HCT116 (cell line): ENCODE measurements at regions of chr1 and their contacts with region 1.

Region 1: DNA sequence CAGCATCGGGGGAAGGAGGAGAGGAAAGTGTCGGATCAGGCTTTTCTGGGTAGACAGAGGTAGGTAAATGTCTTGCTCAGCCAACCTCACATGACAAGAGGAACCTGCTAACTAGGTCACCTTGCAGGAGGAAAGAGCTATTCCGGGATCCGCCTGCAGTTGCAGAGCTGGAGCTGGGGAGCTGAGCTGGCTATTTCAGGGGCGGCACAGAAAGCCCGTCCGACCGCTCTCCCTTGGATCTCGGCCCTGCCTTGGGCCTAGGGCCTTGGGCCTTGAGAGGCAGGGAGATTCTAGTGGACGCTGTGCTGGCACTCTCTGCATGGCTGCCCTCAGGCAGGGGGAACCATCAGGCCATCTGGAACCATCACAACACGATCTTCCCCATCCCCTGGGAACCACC is 56.5 kb upstream of the CTPS1 start:
- DNase-seq: no peak
- ATAC-seq: no peak
- H3K4me3 ChIP-seq: no peak overlapping the region
- H3K27ac ChIP-seq: no peak overlapping the region
- H3K4me1 ChIP-seq: peaks cover 17 to 33% of the 10 kb centered on the region in 2 experiments; a peak in 3 of 4 replicates
- H3K27me3 ChIP-seq: no peaks in the 10 kb centered on the region
- CTCF ChIP-seq: no peak
- POLR2A ChIP-seq: no peak
- RAD21 ChIP-seq: no peak

Region 2: DNA sequence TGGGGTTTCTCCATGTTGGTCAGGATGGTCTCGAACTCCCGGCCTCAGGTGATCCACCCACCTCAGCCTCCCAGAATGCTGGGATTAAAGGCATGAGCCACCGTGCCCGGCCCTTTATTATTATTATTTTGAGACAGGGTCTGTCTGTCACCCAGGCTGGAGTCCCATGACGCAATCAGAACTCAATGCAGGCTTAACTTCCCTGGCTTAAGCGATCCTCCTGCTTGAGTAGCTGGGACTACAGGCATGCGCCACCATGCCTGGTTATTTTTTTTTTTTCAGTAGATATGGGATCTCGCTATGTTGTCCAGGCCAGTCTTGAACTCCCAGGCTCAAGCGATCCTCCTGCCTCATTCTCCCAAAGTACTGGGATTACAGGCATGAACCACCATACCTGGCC is 13.7 kb before region 1 on chr1:
- CTCF ChIA-PET with region 1: no interaction called
- POLR2A ChIA-PET with region 1: interaction called, 3 read pairs
- RAD21 ChIA-PET with region 1: no interaction called
- intact Hi-C with region 1: loop called (anchors 1 kb)
- DNase-seq: no peak
- ATAC-seq: no peak
- H3K4me3 ChIP-seq: no peak overlapping the region
- H3K27ac ChIP-seq: no peak overlapping the region
- H3K4me1 ChIP-seq: peaks cover 0 to 15% of the 10 kb centered on the region in 2 experiments; a peak in 3 of 4 replicates
- H3K27me3 ChIP-seq: no peaks in the 10 kb centered on the region
- CTCF ChIP-seq: no peak
- POLR2A ChIP-seq: no peak
- RAD21 ChIP-seq: no peak